Right ventricle myocardium superior (tissue), 1 donor: ENCODE measurements at regions of chr15 and their contacts with region 1.

Region 1: DNA sequence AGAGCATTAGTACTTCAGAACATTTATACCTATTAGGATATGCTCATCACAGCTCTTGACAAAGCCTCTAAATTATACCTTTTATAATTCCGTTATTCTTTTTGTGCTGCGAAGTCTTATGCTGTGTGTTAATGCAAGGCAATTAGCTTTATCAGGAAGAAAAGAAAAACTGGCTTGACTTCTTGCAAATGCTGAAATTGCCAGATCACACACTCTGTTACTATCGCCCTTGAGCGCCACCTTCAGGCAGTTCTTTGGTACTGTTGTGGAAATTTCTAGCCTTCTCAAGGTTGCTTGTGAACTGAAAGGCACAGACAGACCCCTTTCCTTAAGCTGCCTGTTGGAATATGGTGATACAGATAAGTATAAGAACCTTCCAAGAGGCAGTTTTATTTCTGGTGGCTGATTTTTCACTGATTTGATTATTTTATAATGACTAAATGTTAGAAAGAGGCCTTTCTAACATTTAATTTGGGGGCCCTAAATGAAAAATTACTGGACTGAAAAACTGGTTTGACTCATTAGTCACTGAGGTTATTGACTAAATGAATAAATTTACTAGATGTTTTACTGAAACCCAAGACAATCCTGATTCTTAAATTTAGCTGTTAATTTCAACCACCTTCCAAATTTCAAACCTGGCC is 126.2 kb upstream of the RASGRP1 start:
- DNase-seq: no peak
- ATAC-seq: peak; percentile 61

Region 2: DNA sequence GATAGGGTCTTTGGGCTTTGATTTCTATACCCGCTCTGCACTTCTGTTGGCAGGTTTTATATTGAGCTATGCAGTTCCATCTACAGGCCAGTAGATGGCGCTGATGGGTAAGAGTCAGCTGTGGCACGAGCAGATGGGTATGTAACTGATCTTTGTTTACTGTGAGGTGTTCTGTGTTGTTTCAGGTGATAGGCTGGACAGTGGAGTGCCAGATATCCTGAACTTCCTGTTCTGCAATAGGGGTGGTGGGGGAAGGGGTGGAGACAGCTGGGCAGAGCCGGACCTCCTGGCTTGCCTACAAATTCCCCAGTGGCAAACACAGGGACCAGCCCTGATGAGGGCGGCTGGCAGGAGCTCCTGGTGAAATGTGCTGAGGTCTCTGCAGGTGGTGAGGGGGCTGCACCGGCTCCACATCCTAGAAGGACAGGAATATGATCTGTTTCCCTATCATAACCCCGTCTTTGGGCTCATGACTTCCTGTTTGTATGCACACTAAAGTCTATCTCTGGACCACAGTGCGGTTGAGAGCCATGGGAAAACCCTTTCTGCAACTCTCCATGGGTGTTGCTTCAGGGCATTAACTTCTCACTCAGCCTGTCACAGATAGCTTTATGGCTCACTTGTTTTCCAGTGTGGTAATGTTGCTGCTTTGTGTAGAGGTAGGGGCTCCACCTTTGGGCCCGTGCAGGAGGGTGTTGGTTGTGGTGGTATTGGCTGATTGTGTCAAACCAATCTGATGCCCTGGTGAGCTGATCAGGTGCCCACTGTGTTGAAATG is 250.3 kb before region 1 on chr15:
- intact Hi-C with region 1: loop called (anchors 5 kb)
- DNase-seq: no peak
- ATAC-seq: peak; percentile 84

Region 3: GRCh38 chr15:38474155-38474757 is 216.6 kb before region 1 on chr15:
- intact Hi-C with region 1: loop called (anchors 5 kb)
- DNase-seq: no peak
- ATAC-seq: peak; percentile 88

Region 4: GRCh38 chr15:38587214-38587613 is 103.6 kb before region 1 on chr15:
- intact Hi-C with region 1: no loop called
- DNase-seq: no peak
- ATAC-seq: no peak

Region 5: GRCh38 chr15:38761681-38762080 is 70.9 kb after region 1 on chr15:
- intact Hi-C with region 1: no loop called
- DNase-seq: no peak
- ATAC-seq: no peak